ENCODE measurements at regions of chr1 and their contacts with region 1.

Region 1: DNA sequence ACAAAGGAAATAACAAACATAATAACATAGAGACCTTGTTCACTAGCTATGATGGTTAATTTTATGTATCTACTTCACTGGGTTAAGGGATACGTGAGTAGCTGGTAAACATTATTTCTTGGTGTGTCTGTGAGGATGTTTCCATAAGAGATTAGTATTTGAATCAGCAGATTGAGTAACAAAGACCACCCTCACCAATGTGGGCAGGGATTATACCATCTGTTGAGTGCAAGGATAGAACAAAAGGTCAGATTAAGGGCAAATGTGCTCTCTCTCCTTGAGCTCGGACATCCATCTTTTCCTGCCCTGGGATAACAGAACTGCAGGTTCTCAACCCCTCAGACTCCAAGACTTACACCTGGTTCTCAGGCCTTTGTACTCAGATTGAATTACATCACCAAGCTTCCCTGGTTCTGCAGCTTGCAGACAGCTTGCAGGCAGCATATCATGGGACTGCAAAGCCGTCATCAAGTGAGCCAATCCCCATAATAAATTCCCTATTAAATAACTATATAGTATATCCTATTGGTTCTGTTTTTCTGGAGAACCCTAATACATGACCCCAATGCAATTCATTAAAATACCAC is 9.2 kb downstream of the SPATA6 start:
- DNase-seq: no peak
- H3K4me3 ChIP-seq: no peak overlapping the region
- H3K27ac ChIP-seq: no peak overlapping the region
- H3K4me1 ChIP-seq: no peaks in the 10 kb centered on the region
- H3K27me3 ChIP-seq: no peaks in the 10 kb centered on the region
- CTCF ChIP-seq: no peak
- POLR2A ChIP-seq: no peak

Region 2: GRCh38 chr1:48450505-48450904 is 12.3 kb before region 1 on chr1:
- CTCF ChIA-PET with region 1: interaction called, 10 read pairs
- POLR2A ChIA-PET with region 1: no interaction called
- dilution Hi-C with region 1: no loop called
- intact Hi-C with region 1: no loop called
- DNase-seq: peak; percentile 17
- H3K4me3 ChIP-seq: no peak overlapping the region
- H3K27ac ChIP-seq: no peak overlapping the region
- H3K4me1 ChIP-seq: no peaks in the 10 kb centered on the region
- H3K27me3 ChIP-seq: no peaks in the 10 kb centered on the region
- CTCF ChIP-seq: no peak
- POLR2A ChIP-seq: no peak

Measured in endothelial cell of umbilical vein (primary cell).